ENCODE measurements at regions of chr10 and their contacts with region 1.

Region 1: DNA sequence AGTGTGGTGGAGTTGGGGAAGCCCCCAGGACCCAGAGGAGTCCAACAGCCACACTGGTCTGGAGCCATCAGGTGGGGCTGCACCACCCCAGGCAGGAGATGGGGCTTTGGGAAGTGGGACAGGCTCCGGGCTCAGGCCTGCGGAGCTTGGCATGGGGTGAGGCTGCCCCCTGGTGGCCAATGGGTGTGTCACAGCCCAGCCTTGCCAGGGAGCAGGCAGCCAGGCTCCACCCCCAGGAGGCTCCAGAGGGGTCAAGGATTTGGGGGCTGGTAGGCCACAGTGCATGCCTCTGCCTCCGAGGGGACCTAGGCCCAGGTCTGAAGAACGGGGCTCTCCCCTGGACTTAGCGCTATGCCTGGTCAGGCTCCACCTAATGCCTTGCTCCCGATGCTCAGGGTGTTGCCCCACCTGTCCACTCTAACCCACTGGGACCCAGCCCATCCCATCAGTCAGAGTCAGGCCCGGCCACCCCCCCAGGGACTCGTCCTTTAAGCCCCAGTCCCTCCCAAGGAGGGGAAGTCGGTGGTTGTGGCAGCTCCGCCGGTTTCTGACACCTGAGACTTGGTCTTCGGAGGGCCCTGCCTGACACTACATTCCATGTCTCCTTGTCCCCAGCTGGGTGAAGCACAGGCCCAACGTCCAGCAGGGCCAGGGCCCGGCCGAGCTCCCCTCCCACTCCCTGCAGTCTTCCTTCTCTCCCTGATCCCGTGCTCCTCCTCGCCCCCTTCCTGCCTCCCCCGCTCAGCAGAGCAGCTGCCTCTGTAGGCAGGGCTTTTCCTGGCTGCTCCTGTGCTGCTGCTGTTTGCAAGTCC is 11.3 kb upstream of the SAMD8 start:
- DNase-seq: peak; percentile 67 to 90 (median 80)
- H3K4me3 ChIP-seq: peak overlapping the region in 22 of 59 donors; percentile 1 to 32 (median 10)
- H3K27ac ChIP-seq: peak overlapping the region in 29 of 59 donors; percentile 1 to 83 (median 51)
- H3K27me3 ChIP-seq: no peaks in the 10 kb centered on the region
- CTCF ChIP-seq: peak; percentile 89 to 100 (median 99)

Region 2: DNA sequence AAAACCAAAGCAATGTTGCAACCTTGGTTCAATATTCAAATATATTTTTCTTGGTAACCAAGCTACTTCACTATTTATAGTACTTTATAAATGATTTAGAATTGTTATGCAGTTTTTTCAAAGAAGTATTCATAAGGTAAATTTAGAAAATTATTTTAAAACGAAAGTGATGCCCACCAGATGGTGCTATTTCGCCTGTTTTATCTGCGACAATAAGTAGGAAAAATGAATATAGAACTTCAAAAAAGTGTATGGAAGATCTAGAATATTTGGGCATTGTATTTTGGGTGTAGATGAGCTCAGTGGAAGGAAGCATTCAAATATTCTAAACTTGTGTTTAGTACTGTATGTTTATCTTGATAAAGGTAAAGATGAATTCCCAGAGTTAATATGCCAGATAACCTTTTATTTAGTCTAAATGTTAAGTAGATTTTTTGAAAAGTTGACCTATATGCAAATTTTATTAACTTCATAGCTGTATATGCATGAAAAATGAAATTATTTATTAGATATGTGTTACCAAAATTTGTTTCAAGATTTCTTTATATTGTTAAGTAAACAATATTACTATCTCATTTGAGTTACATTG is 856.0 kb before region 1 on chr10:
- intact Hi-C with region 1: loop called (anchors 2 to 5 kb)
- DNase-seq: no peak
- H3K4me3 ChIP-seq: no peak overlapping the region
- H3K27ac ChIP-seq: no peak overlapping the region
- H3K27me3 ChIP-seq: no peaks in the 10 kb centered on the region
- CTCF ChIP-seq: peak; percentile 50 to 87 (median 72)

Region 3: DNA sequence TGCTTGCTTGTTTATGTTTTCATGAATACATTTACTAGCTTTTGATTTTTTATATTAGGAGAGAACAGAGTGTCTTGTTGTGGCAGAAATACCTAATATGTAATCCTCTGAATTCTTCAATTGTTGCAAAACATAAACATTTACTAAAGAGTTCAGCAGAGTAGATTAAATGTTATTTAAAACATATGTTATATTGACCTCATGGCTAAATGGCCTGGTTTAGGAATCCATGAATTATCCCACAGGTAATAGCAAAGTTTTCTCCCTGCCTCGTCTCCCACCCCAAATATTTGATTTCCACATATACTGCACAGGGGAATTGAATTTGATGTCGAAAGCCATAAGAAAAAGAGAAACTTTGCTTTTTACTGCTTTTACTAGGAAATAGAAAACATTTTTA is 837.3 kb before region 1 on chr10:
- intact Hi-C with region 1: loop called (anchors 2 kb)
- DNase-seq: no peak
- H3K4me3 ChIP-seq: no peak overlapping the region
- H3K27ac ChIP-seq: no peak overlapping the region
- H3K27me3 ChIP-seq: no peaks in the 10 kb centered on the region
- CTCF ChIP-seq: no peak

Region 4: DNA sequence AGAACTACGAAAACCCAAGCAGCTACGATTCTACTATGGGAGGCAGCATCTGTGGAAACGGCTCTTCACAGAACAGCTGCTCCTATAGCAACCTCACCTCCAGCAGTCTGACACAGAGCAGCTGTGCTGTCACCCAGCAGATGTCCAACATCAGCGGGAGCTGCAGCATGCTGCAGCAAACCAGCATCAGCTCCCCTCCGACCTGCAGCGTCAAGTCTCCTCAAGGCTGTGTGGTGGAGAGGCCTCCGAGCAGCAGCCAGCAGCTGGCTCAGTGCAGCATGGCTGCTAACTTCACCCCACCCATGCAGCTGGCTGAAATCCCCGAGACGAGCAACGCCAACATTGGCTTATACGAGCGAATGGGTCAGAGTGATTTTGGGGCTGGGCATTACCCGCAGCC is 70.3 kb before region 1 on chr10:
- intact Hi-C with region 1: loop called in 1 of 2 experiments (anchors 5 kb)
- DNase-seq: no peak
- H3K4me3 ChIP-seq: no peak overlapping the region
- H3K27ac ChIP-seq: peak overlapping the region in 4 of 59 donors; percentile 12 to 31 (median 22)
- H3K27me3 ChIP-seq: no peaks in the 10 kb centered on the region
- CTCF ChIP-seq: no peak

Region 5: DNA sequence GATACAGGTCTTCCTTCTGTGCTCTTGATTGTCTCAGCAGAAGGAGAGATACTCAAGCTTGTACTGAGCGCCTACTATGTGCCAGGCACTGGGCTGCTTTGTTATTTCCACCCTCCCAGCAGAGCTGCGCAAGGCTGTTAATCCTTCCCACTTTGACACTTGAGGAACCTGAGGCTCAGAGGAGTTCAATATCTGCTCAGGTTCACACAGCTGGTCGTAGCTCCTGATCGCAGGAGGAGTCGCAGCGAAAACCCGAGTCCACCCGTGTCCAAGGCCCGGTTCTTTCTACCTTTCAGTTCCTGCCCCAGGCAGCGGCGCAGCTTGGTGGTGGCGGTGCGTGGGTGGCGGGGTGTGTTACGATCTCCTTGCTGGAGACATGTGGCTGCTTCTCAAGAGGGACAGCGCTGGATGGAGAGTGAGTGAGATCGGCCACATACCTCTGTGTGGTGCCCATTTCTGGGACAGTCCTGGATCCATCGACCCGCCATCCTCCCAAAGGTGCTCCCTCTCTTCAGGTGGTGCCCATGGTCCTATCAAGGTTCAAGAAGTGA is 15.2 kb before region 1 on chr10:
- intact Hi-C with region 1: no loop called
- DNase-seq: no peak
- H3K4me3 ChIP-seq: no peak overlapping the region
- H3K27ac ChIP-seq: no peak overlapping the region
- H3K27me3 ChIP-seq: no peaks in the 10 kb centered on the region
- CTCF ChIP-seq: no peak

Measured in dorsolateral prefrontal cortex (tissue), 120 donors.